IMR-90 (cell line): ENCODE measurements at regions of chr7 and their contacts with region 1.

Region 1: GRCh38 chr7:105126436-105126975 is 112.5 kb downstream of the KMT2E start:
- DNase-seq: peak; percentile 30
- ATAC-seq: peak; percentile 46; the same call in 1 of the 2 replicates
- H3K4me3 ChIP-seq: no peak overlapping the region
- H3K27ac ChIP-seq: no peak overlapping the region
- H3K4me1 ChIP-seq: no peaks in the 10 kb centered on the region; the same call in 1 of the 2 replicates
- H3K27me3 ChIP-seq: no peaks in the 10 kb centered on the region
- CTCF ChIP-seq: no peak
- POLR2A ChIP-seq: no peak
- RAD21 ChIP-seq: no peak

Region 2: GRCh38 chr7:105101864-105102263 is 24.6 kb before region 1 on chr7:
- CTCF ChIA-PET with region 1: no interaction called
- POLR2A ChIA-PET with region 1: no interaction called
- dilution Hi-C with region 1: no loop called
- in situ Hi-C with region 1: no loop called
- intact Hi-C with region 1: loop called (anchors 2 kb)
- DNase-seq: no peak
- ATAC-seq: no peak
- H3K4me3 ChIP-seq: no peak overlapping the region
- H3K27ac ChIP-seq: no peak overlapping the region
- H3K4me1 ChIP-seq: peaks cover 8% of the 10 kb centered on the region
- H3K27me3 ChIP-seq: no peaks in the 10 kb centered on the region
- CTCF ChIP-seq: no peak
- POLR2A ChIP-seq: no peak
- RAD21 ChIP-seq: no peak

Region 3: DNA sequence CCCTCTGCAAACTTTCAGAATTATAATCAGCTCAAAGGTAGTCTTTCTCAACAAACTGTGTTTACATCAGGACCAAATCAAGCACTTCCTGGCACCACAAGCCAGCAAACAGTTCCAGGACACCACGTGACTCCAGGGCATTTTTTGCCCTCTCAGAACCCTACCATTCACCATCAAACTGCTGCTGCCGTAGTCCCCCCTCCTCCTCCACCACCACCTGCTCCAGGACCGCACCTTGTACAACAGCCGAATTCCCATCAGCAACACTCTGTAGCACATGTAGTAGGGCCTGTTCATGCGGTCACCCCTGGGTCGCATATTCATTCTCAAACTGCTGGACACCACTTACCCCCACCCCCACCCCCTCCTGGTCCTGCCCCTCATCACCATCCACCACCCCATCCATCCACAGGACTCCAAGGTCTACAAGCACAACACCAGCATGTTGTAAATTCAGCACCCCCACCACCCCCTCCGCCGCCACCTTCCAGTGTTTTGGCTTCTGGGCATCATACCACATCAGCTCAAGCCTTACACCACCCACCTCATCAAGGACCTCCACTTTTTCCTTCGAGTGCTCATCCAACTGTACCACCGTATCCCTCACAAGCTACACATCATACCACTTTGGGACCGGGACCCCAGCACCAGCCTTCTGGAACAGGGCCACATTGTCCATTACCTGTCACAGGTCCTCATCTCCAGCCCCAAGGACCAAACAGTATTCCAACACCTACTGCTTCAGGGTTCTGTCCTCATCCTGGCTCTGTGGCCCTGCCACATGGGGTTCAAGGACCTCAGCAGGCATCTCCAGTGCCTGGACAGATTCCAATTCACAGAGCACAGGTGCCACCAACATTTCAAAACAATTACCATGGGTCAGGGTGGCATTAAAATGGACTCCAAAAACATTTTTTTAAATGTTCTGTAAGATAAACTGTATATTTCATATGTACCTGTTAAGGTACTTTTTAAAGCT is 13.8 kb before region 1 on chr7:
- CTCF ChIA-PET with region 1: no interaction called
- POLR2A ChIA-PET with region 1: interaction called, 16 read pairs
- dilution Hi-C with region 1: no loop called
- in situ Hi-C with region 1: no loop called
- intact Hi-C with region 1: loop called (anchors 2 kb)
- DNase-seq: no peak
- ATAC-seq: peak; percentile 8; the same call in 1 of the 2 replicates
- H3K4me3 ChIP-seq: no peak overlapping the region
- H3K27ac ChIP-seq: no peak overlapping the region
- H3K4me1 ChIP-seq: peaks cover 5% of the 10 kb centered on the region; the same call in 1 of the 2 replicates
- H3K27me3 ChIP-seq: no peaks in the 10 kb centered on the region
- CTCF ChIP-seq: no peak
- POLR2A ChIP-seq: no peak
- RAD21 ChIP-seq: no peak